ENCODE measurements at regions of chr4 and their contacts with region 1.

Region 1: GRCh38 chr4:25439918-25440477 is 62.9 kb downstream of the ANAPC4 start:
- DNase-seq: no peak
- ATAC-seq: peak in 1 of 2 donors; percentile 62
- H3K4me3 ChIP-seq: no peak overlapping the region
- H3K27ac ChIP-seq: no peak overlapping the region
- H3K4me1 ChIP-seq: peaks cover 0 to 5% of the 10 kb centered on the region in 2 donors
- H3K27me3 ChIP-seq: no peaks in the 10 kb centered on the region
- CTCF ChIP-seq: peak; percentile 16 to 78 (median 53)
- POLR2A ChIP-seq: no peak

Region 2: GRCh38 chr4:25500626-25501316 is 60.8 kb after region 1 on chr4:
- in situ Hi-C with region 1: no loop called
- intact Hi-C with region 1: no loop called
- DNase-seq: no peak
- ATAC-seq: no peak
- H3K4me3 ChIP-seq: no peak overlapping the region
- H3K27ac ChIP-seq: no peak overlapping the region
- H3K4me1 ChIP-seq: no peaks in the 10 kb centered on the region
- H3K27me3 ChIP-seq: no peaks in the 10 kb centered on the region
- CTCF ChIP-seq: no peak
- POLR2A ChIP-seq: no peak

Region 3: DNA sequence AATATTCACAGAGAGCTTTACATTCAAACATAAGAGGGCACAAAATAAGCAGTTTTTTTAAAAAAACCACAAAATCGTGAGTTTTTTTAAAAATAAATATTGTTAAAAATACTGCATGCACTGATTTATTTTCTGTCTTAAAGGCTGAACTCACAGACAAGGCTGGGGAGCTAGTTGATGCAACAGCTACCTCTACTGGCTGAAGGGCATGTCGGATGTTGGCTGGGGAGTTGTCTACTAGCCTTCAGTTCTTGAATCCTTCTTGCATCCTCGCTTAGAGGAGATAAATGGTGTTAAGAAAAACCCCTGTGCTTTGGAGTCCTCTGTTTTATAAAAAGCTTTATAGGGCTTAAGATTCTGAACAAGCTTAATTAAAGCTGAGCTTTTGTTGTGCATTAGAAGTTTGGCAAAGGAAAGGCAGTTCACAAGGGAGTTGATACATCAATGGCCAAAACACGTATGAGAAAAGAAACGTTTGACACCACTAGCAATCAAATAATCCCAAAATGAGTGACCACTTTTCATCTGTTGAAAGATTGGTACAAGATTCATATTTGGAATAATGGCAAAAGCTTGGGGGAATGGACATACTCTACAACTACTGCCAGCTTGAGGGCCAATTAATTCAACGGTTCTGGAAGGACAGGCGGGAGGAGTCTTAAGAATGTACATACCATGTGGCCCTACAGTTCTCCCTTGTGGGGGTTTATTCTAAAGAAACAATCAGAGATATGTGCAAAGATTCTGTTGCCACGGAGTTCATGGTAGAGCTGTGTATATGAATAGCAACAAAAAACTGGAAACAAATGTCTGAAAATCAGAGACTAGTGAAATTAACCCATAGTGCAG is 328.1 kb after region 1 on chr4:
- in situ Hi-C with region 1: loop called (anchors 10 to 25 kb)
- intact Hi-C with region 1: loop called (anchors 1 kb)
- DNase-seq: peak; percentile 6 to 21
- ATAC-seq: peak in 1 of 2 donors; percentile 66
- H3K4me3 ChIP-seq: no peak overlapping the region
- H3K27ac ChIP-seq: no peak overlapping the region
- H3K4me1 ChIP-seq: no peaks in the 10 kb centered on the region
- H3K27me3 ChIP-seq: no peaks in the 10 kb centered on the region
- CTCF ChIP-seq: peak in 4 of 5 experiments; percentile 24 to 70 (median 46)
- POLR2A ChIP-seq: no peak

Region 4: DNA sequence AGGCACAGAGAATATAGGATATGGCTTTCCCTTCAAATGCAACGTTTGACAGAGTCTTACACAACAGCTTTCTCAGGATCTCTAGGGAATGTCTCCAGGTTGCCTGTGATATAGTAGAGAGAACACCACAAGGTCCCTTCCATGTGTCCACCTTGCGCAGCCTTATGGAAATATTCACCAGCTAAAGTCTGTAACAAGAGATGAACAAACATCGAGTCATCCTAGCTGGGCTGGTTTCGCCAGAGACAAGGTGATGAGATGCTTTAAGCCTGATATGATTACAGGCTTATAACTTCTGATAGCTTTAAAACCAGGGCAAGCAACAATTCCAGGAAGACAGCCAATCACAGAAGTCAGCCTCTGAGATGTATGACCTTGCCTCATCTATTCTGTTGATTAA is 339.0 kb after region 1 on chr4:
- in situ Hi-C with region 1: loop called in 3 of 4 experiments (anchors 10 to 25 kb)
- intact Hi-C with region 1: no loop called
- DNase-seq: no peak
- ATAC-seq: no peak
- H3K4me3 ChIP-seq: no peak overlapping the region
- H3K27ac ChIP-seq: no peak overlapping the region
- H3K4me1 ChIP-seq: no peaks in the 10 kb centered on the region
- H3K27me3 ChIP-seq: no peaks in the 10 kb centered on the region
- CTCF ChIP-seq: no peak
- POLR2A ChIP-seq: no peak

Measured in gastrocnemius medialis (tissue), 4 donors.